A673 (cell line): ENCODE measurements at regions of chr16 and their contacts with region 1.

Region 1: DNA sequence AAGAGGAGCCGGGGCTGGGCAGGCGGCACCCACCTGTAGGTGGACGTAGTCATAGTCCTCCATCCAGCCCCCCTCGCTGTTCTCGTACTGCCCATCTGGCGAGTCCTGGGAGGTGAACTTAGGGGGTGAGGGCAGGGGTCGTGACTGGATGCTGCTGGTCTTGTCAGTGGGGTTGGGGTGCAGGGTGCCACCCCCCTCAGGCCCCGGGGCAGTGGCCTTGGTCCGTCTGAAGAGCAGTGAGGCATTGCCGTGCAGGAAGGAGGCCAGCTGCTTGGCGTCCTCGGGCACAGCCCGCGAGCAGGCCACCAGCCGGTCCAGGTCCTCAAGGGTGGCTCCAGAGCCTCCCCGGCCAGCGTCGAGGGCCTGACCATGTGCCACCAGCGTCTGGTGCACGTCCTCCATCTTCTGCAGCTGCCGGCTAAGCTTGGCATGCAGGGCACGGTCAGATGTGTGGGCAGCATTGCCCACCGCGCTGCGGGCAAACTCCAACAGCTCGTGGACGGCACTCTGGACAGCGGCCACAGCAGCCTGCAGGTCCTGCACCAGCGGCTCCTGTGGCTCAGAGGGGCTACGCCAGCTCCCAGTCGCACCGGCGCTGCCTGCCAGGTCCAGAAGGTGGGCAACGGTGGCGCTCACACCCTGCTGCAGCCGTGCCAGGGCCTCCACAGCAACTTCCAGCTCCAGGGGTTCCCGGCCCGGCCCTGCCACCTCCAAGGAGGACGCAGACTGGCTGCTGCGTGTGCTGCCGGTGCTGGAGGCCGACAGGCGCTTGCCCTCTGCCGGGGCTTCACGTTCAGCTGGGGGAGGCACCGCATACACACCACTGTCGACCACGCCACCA is 16.3 kb downstream of the CTRB1 start:
- DNase-seq: no peak
- H3K4me3 ChIP-seq: no peak overlapping the region
- H3K27ac ChIP-seq: no peak overlapping the region
- H3K4me1 ChIP-seq: peaks cover 33% of the 10 kb centered on the region
- H3K27me3 ChIP-seq: no peaks in the 10 kb centered on the region
- CTCF ChIP-seq: no peak

Region 2: GRCh38 chr16:75130150-75130771 is 104.8 kb before region 1 on chr16:
- CTCF ChIA-PET with region 1: no interaction called
- POLR2A ChIA-PET with region 1: no interaction called
- intact Hi-C with region 1: no loop called
- DNase-seq: no peak
- H3K4me3 ChIP-seq: no peak overlapping the region
- H3K27ac ChIP-seq: no peak overlapping the region
- H3K4me1 ChIP-seq: no peaks in the 10 kb centered on the region
- H3K27me3 ChIP-seq: no peaks in the 10 kb centered on the region
- CTCF ChIP-seq: peak; percentile 34; the same call in 1 of the 2 replicates

Region 3: DNA sequence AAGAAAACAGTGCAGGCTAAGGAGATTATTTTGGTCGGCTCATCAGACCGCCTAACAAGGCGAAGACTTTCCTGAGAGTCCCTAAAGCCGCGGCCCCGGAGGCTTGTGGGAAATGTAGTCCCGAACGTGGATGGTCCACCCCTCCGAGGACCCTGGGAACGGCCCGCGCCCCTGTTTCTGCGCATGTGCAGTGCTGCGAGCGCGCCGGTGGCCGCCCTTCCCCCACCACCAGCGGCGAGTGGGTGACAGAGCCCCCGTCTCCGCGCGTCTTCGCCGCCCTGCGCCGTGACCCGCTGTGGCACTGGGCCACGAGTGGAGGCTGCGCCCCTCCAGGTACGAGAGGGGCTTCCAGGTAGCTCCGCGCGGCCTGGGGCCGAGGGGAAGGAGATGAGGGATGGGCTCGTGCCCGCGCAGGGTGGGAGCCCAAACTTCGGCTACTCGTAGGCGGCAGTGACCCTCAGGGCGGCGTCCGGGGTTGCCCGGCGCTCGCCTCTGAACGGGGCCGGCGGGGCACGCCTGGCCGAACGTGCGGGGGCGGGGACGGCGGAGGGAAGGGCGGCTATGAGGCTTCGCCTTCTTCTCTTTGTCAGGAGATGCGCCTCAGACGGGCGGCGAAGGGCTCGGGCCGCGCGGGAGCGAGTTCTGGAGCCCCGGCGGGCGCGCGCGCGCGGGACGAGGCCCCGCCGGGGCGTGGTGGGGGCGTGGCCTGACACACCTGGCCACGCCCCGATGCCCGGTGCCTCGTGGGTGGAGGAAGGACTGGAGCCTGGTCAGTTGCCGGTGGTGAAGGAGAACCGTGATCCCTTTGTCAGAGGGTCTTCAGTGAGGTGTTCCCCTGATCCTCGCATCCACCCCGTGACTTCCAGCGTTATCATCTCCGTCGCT is 86.5 kb before region 1 on chr16 and contains the start of gene ZFP1:
- CTCF ChIA-PET with region 1: no interaction called
- POLR2A ChIA-PET with region 1: no interaction called
- intact Hi-C with region 1: no loop called
- DNase-seq: peak; percentile 97
- H3K4me3 ChIP-seq: peak within 1 kb of the TSS; percentile 91
- H3K27ac ChIP-seq: peak within 1 kb of the TSS; percentile 89
- H3K4me1 ChIP-seq: no peaks in the 10 kb centered on the region
- H3K27me3 ChIP-seq: no peaks in the 10 kb centered on the region
- CTCF ChIP-seq: no peak
- total RNA-seq, gene ZFP1: 22.6 and 23.3 TPM in 2 replicates

Region 4: DNA sequence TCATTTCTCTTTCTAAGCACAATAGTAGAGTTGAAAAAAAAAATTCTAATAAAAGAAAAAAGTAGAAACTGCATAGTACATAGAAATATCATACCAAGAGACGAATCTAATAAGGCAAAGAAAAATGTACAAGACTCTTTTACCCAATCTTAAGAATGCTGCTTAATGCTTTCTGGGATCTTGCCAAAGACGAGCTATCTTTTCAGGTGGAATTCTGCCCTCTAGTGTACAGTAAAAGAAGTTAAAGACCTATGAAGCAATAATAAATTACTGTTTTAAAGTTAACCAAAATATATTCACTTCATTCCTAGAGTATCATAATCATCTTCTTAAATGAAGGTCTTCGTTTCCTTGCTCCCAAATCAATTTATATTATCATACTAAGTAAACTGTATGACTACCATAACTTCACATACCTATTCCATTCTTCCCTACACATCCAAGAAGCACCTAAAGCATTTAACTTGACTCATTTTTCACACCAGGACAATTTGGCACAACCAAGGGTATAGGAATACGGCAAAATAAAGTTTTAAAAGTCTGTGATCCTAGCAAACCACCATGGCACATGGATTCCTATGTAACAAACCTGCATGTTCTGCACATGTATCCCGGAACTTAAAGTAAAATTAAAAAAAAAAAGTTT is 150.6 kb after region 1 on chr16:
- CTCF ChIA-PET with region 1: interaction called, 31 read pairs
- POLR2A ChIA-PET with region 1: no interaction called
- intact Hi-C with region 1: loop called (anchors 1 kb)
- DNase-seq: peak; percentile 85
- H3K4me3 ChIP-seq: no peak overlapping the region
- H3K27ac ChIP-seq: no peak overlapping the region
- H3K4me1 ChIP-seq: peaks cover 5% of the 10 kb centered on the region
- H3K27me3 ChIP-seq: no peaks in the 10 kb centered on the region
- CTCF ChIP-seq: peak; percentile 75

Region 5: GRCh38 chr16:75402821-75403475 is 167.9 kb after region 1 on chr16:
- CTCF ChIA-PET with region 1: interaction called, 7 read pairs
- POLR2A ChIA-PET with region 1: no interaction called
- intact Hi-C with region 1: loop called (anchors 5 kb)
- DNase-seq: peak; percentile 65
- H3K4me3 ChIP-seq: no peak overlapping the region
- H3K27ac ChIP-seq: no peak overlapping the region
- H3K4me1 ChIP-seq: peaks cover 9% of the 10 kb centered on the region
- H3K27me3 ChIP-seq: no peaks in the 10 kb centered on the region
- CTCF ChIP-seq: peak; percentile 81